ENCODE measurements at regions of chr5 and their contacts with region 1.

Region 1: DNA sequence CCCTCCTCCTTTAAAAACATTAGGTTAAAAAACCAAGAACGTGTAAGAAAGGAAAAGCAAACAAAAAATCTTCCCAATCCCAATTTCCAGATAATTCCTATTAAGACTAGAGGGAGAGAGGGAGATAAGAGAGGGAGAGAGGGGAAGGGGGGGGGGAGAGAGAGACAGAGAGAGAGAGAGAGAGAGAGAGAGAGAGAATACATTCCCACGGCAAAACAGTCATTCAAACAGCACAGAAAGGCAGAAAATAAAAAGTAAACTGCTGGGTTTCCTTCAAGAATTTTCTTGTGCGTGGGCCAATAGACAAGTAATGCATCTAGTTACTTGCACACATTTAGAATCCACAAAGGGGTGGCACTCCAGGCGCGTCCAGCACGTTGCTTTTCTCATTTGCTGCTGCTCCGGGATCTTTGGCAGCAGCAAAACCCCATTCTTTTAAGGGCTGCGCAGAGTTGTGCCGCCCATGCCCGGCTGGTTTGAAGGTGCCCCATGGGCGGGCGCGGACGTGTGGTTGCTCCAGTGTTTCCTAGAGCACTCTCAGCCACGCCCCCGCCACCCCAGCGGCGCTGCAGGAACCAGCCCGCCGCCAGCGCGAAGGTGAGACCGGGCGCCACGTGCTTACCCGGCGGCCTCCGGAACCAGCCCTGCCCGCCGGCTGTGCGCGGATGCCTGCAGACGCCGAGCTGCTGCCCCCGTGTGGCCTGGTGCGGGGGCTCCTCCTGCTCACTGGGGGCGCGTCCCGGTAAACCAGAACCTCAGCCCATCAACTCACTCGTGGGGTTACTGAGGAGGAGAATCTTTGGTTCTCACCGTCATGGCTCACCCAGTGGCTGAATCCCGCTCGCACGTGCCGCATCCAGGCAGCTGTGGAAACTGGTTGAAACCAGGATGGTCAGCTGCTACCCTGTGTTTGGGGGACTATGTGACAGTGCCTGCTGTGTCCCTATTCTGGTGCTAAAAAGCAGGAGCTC is 44.6 kb downstream of the STC2 start:
- DNase-seq: peak; percentile 43 to 95 (median 69)

Region 2: GRCh38 chr5:172707285-172708182 is 576.1 kb before region 1 on chr5:
- intact Hi-C with region 1: loop called (anchors 5 kb)
- DNase-seq: peak; percentile 36 to 95 (median 68)

Region 3: DNA sequence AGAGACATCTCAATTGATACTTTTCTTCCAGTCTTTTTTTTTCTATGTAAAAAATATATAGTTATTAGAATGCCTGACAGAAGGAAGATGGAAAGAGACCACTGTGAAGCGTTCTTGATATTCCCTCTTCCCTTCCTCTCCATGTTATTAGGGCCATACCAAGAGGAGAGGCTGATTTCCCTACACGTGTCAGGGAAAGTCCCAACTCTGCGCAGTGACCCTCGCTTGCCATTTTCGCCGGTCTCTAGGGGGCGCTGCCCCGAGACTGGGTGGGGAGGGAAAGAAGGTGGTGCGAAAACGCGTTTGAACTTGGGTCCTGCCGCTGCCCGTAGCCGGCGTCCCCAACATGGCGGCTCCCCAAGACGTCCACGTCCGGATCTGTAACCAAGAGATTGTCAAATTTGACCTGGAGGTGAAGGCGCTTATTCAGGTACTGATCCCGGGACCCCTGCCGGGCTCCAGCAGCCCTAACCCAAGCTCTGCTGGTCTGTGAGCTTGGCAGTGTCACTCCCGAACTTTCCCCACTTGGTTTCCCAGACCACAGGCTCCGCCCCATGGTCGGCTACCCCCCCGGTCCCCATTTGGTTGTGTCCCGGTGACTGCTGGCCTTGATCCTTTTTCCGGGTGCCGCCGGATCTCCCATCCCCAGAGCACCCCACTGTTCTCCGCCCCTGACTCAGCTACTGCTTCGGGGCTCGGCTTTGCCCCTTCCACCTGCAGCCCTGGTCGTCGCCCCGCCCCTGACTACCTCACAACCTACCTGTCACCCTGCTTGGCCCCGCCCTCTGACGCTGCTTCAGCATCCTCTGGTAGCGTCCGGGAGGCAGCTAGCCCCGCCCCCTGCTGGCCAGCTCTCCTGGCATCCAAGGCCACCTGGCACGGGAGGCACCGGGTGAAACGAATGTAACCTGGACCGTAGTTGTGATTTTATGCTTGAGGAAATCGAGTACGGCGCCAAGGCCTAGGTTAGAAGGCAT is 139.1 kb before region 1 on chr5 and contains the start of gene BNIP1:
- intact Hi-C with region 1: loop called (anchors 10 kb)
- DNase-seq: peak; percentile 85 to 98 (median 92)

Measured in posterior cingulate gyrus (tissue), 11 donors.